Left ventricle myocardium superior (tissue), 1 donor: ENCODE measurements at regions of chr13 and their contacts with region 1.

Region 1: DNA sequence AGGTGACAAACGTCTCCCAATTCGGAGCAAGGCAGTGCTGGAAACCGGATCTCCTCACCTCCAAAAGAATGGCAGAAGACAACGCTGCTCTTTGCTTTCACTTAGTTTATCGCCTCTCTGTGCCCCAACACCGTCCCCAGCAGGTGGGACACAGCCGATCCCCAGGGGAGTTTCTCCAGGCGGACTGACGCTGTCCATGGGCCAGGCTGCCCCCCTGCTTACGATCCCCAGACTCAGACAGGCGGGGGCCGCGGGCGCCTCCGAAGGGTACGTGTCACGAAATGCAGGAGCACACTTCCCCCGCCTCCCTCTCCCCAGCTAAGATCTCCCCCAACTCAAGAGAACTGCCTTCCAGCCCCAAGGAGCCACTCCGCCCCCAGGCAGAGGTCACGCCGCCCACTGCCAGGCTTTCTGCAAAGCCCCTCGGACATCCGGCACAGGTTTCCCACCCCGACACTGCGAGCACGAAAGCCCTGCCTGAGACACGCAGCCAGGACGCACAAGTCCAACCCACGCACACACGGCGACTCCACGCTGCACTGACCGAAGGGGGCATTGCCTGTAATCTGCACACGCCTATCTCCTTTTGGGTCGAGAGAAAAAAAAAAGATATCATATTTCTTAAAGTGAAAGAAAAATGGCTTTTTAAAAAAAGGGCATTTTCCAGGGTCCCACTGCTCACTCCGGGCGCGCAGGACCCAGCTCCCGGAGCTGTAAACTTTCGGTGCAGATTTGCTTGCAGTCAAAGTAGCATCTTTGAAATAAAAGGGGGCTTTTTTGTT is 2.0 kb downstream of the SPRY2 start:
- DNase-seq: peak; percentile 85
- ATAC-seq: peak; percentile 46

Region 2: GRCh38 chr13:79679334-79679733 is 659.6 kb before region 1 on chr13:
- intact Hi-C with region 1: loop called (anchors 10 kb)
- DNase-seq: peak; percentile 67
- ATAC-seq: peak; percentile 68

Region 3: DNA sequence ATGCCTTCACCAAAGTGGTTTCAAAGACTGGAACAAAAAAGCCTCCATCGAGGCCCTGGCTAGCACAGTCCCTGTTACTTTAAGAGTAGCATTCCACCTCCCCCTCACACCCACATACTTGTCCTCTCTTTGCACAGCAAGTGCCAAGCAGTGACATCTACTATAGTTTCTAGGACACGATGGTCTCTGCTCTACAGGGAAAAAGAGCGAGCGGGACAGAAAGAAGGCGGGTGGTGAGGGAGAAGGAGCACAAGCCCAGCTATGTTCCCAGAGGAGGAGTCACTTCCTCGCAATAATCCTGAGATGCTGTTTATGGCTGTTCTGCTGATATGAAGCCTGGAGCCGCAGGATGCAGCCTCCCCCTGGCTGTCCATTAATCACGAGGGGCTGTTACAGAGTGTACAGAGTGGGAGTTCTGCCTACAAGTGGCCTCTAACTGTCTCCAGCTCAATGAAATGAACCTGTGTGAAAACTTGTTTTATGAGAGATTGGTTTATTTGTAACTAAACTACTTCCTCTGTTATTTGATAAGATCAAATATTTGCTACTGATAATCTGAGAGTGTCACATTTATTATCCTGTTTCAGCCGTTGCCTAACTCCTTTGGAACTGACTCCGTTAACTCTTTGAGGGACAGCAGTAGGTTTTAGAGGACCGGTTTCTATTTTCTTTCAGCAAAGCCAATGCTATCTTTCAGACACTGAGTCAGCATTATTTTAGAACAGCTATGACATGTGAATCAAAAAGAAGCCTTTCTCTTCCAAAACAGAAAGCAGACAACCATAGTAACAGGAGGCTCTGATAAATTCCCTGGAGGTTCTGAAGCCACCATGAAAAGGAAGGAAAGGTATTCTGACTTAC is 206.0 kb before region 1 on chr13:
- intact Hi-C with region 1: loop called (anchors 5 kb)
- DNase-seq: peak; percentile 66
- ATAC-seq: peak; percentile 96

Region 4: GRCh38 chr13:80408270-80408669 is 69.3 kb after region 1 on chr13:
- intact Hi-C with region 1: no loop called
- DNase-seq: no peak
- ATAC-seq: no peak

Region 5: DNA sequence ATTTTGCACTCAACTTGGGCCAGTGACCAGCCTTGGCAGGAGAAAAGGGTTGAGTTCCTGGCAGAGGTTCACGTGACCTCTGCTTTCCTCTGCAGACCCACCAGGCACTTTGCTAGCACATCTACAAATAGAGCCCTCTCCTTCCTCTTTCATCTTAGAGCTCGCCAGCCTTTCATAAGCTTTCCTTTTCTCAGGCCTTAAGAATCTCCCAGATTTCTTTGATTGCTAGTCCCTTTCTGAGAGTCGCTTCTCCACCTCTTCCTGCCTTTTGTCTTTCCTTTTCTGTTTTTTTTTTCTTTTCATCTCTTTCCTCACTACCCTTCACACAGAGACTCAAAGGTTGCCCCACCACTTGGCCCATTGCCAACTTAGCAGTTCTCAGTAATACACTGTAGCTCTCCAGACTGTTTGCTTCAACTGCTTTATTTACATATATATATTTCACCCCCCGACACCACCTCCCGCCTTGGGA is 377.7 kb after region 1 on chr13:
- intact Hi-C with region 1: no loop called
- DNase-seq: peak; percentile 43
- ATAC-seq: peak; percentile 98